Heart left ventricle (tissue), 16 donors: ENCODE measurements at regions of chr3 and their contacts with region 1.

Region 1: DNA sequence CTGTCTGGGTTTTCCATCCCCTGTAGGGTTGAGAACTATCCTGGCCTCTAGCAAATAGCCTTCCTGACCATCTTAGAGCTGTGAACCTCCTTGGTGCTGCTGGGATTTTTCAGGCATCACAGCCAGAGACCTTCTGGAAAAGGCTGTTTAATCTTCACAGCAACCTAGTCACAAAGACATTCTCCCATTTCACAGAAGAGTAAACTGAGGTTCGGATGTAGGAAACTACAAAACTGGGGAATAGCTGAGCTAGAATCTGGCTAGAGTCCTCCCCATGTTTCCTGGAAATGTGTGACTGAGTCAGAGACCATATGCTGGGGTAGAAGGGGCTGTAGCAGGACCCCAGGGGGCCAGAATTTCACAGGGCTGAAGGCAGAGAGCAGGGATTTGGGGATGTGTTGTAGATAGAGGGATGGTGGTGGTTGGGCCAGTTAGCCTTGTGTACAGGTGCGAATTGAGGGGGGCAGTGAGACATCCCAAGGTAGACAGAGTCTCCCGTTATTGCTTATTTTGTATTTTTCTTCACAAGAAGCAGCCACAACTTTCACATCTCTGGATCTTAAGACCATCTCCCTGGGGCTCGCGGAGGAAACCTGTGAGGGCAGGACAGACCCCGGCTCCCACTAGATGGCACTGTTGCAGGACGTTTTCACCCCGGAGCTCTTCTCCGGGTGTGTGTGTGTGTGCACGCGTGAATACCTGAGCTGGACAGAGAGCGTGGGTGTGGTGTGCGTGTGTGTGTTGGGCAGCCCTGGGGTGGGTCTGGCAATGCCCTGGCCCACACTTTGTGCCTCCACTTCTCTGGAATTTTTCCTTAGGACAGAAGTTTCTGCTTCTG is 66.9 kb upstream of the PRR23C start:
- DNase-seq: peak; percentile 37 to 73 (median 59)
- ATAC-seq: peak; percentile 57 to 82 (median 80)
- H3K4me3 ChIP-seq: no peak overlapping the region
- H3K27ac ChIP-seq: no peak overlapping the region
- H3K4me1 ChIP-seq: no peaks in the 10 kb centered on the region
- H3K27me3 ChIP-seq: peaks cover 0 to 8% (median 0%) of the 10 kb centered on the region in 9 donors
- CTCF ChIP-seq: peak; percentile 50 to 76 (median 64)
- POLR2A ChIP-seq: no peak

Region 2: DNA sequence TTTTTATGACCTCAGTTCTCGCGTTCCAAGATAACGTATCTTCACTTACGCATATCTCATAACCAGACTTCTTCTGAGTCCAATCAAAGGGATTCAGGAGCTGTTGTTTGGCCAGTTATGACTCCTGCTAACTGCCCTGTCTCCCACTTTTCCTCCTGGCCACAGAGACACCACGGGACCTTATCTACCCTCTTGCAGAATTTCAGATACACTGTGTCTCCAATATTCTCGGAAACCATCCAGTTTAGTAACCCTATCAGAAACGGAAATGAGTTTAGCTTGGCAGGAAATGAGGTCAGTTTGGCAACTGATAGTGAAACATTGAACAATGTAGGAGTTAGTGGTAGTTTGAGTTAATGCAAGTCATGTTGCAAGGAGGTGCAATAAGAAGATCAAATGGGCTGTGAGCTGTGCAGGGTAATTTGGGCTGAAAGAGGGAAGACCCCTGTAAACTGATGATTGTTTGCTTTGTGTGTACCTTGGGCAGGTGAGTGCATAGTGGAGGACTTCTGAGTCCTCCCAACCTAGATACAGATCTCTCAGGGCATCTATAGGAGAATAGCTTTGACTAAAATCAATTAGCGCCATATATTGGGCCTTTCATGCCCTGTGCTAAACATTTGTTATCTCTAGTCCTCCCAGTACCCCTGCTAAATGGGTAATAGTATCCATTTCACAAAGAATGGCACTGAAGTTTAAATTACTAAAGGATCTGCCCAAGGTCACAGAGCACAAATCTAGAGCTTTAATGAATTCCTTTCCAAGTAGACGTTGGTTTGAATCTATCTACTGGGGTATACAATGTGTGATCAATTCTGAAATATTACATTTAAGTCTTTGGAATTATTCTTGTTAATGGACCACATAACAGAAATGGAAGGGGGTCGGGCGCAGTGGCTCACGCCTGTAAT is 235.6 kb before region 1 on chr3:
- intact Hi-C with region 1: no loop called
- DNase-seq: no peak
- ATAC-seq: peak; percentile 55 to 95 (median 76)
- H3K4me3 ChIP-seq: peak overlapping the region in 3 of 12 donors; percentile 5 to 19 (median 18)
- H3K27ac ChIP-seq: peak overlapping the region in 9 of 12 donors; percentile 17 to 78 (median 47)
- H3K4me1 ChIP-seq: peaks cover 0 to 12% (median 0%) of the 10 kb centered on the region in 12 donors
- H3K27me3 ChIP-seq: no peaks in the 10 kb centered on the region
- CTCF ChIP-seq: no peak
- POLR2A ChIP-seq: no peak

Region 3: GRCh38 chr3:138915503-138916498 is 195.8 kb before region 1 on chr3:
- intact Hi-C with region 1: no loop called
- DNase-seq: peak; percentile 91 to 97 (median 94)
- ATAC-seq: peak; percentile 97 to 98 (median 98)
- H3K4me3 ChIP-seq: peak overlapping the region; percentile 57 to 90 (median 84)
- H3K27ac ChIP-seq: peak overlapping the region; percentile 82 to 98 (median 96)
- H3K4me1 ChIP-seq: peaks cover 0 to 16% (median 6%) of the 10 kb centered on the region in 12 donors
- H3K27me3 ChIP-seq: no peaks in the 10 kb centered on the region
- CTCF ChIP-seq: peak; percentile 78 to 97 (median 87)
- POLR2A ChIP-seq: peak in 1 of 2 donors; percentile 29

Region 4: DNA sequence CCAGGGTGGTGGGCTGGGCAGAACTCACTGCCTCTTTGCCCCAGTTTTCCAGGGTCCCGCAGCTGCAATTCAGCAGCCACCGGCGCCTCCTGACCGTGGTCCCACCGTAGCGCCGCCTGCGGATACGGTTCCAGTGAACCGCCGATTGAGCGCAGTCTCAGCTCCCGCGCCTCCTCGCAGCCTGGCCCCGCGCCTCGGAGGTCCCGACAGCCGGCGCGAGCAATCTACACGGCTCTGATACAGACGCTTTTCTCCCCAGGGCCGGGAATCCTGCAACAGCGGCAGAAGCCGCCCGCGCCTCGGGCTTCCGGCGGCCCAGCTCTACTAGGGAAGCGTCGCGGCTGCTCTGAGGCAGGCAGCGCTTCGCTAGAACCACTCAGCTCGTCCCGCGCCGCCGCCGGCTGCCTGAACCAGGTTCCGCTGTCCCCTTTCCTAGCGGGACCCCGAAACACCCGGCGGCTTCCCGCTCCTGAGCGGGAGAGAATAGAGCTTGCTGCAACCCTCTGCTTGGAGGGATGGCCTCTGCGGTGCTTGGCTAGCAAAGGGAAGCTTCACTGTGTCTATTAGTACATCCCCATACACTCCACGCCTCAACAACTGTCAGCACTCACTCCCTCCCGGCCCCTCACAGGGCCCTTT is 161.5 kb before region 1 on chr3:
- intact Hi-C with region 1: loop called in 1 of 10 experiments (anchors 5 kb)
- DNase-seq: no peak
- ATAC-seq: peak in 3 of 4 donors; percentile 47 to 64 (median 62)
- H3K4me3 ChIP-seq: peak overlapping the region; percentile 14 to 50 (median 39)
- H3K27ac ChIP-seq: no peak overlapping the region
- H3K4me1 ChIP-seq: peaks cover 7 to 39% (median 26%) of the 10 kb centered on the region in 12 donors
- H3K27me3 ChIP-seq: peaks cover 38 to 96% (median 82%) of the 10 kb centered on the region in 9 donors
- CTCF ChIP-seq: no peak
- POLR2A ChIP-seq: no peak

Region 5: DNA sequence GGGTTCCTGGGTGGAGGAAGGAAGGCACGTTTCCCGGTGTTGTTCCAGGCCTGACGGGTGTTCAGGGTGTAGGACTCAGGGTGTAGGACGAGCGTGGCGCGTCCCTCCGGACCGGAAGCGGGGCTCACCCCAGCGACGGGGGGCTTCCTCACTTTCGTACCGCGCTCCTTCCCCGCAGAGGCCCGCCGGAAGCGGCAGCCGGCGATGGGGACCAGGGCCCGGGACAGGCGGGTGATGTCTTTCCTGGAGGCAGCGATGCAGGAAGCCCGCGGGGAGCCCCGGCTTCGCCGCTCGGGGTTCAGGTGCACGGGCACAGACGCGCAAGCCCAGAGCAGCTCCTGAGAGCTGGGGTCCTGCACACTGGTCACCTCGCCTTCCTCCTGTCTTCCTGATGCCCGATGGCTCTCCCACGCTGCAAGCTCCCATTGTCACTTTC is 151.2 kb before region 1 on chr3:
- intact Hi-C with region 1: no loop called
- DNase-seq: no peak
- ATAC-seq: no peak
- H3K4me3 ChIP-seq: no peak overlapping the region
- H3K27ac ChIP-seq: no peak overlapping the region
- H3K4me1 ChIP-seq: peaks cover 0 to 5% (median 0%) of the 10 kb centered on the region in 12 donors
- H3K27me3 ChIP-seq: peaks cover 23 to 84% (median 53%) of the 10 kb centered on the region in 9 donors
- CTCF ChIP-seq: no peak
- POLR2A ChIP-seq: no peak

Region 6: GRCh38 chr3:139095803-139096466 is 15.7 kb before region 1 on chr3:
- intact Hi-C with region 1: no loop called
- DNase-seq: no peak
- ATAC-seq: no peak
- H3K4me3 ChIP-seq: no peak overlapping the region
- H3K27ac ChIP-seq: no peak overlapping the region
- H3K4me1 ChIP-seq: no peaks in the 10 kb centered on the region
- H3K27me3 ChIP-seq: peaks cover 0 to 5% (median 0%) of the 10 kb centered on the region in 9 donors
- CTCF ChIP-seq: no peak
- POLR2A ChIP-seq: no peak

Region 7: DNA sequence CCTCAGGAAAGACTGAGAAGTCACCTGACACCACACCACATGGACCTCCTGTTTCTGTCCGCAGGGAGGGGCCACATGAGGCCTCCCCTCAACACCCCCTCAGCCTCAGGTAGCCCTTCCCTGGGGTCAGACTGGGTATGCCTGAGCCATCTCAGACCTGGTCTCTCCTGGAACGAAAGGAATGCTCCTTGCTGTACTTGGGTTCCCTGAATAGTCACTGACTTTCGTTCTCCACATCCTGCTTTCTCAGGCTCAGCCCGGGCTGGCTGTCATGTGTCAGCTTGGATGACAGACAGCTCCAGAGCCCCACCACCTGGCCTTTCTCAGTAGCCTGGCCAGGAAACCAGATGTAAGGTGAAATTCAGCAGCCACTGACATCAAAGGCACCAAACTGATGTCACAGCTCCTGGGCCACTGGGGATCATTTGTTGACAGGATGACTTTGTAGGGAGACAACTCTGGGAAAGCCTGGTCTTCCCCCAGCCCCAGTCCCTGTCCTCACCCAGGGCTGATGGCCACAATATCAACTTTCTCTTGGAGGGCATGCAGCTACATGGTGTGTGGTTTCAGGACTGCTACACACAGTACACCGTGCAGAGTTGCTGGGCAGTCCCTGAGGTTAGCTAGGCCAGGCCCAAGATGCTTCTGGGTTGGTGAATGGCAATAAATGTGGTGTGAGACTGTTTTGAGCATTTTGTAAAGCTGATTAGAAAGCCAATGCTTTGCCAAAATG is 90.8 kb after region 1 on chr3:
- intact Hi-C with region 1: loop called in 1 of 10 experiments (anchors 10 kb)
- DNase-seq: peak in 2 of 5 donors; percentile 20 to 41
- ATAC-seq: peak in 3 of 4 donors; percentile 41 to 72 (median 49)
- H3K4me3 ChIP-seq: no peak overlapping the region
- H3K27ac ChIP-seq: no peak overlapping the region
- H3K4me1 ChIP-seq: peaks cover 0 to 4% (median 0%) of the 10 kb centered on the region in 12 donors
- H3K27me3 ChIP-seq: no peaks in the 10 kb centered on the region
- CTCF ChIP-seq: peak in 4 of 12 donors; percentile 15 to 37 (median 22)
- POLR2A ChIP-seq: no peak

Region 8: GRCh38 chr3:139319428-139320402 is 208.1 kb after region 1 on chr3:
- intact Hi-C with region 1: loop called in 1 of 10 experiments (anchors 5 kb)
- DNase-seq: no peak
- ATAC-seq: no peak
- H3K4me3 ChIP-seq: no peak overlapping the region
- H3K27ac ChIP-seq: no peak overlapping the region
- H3K4me1 ChIP-seq: peaks cover 0 to 6% (median 0%) of the 10 kb centered on the region in 12 donors
- H3K27me3 ChIP-seq: peaks cover 0 to 22% (median 0%) of the 10 kb centered on the region in 9 donors
- CTCF ChIP-seq: peak in 7 of 12 donors; percentile 10 to 31 (median 22)
- POLR2A ChIP-seq: no peak

Region 9: DNA sequence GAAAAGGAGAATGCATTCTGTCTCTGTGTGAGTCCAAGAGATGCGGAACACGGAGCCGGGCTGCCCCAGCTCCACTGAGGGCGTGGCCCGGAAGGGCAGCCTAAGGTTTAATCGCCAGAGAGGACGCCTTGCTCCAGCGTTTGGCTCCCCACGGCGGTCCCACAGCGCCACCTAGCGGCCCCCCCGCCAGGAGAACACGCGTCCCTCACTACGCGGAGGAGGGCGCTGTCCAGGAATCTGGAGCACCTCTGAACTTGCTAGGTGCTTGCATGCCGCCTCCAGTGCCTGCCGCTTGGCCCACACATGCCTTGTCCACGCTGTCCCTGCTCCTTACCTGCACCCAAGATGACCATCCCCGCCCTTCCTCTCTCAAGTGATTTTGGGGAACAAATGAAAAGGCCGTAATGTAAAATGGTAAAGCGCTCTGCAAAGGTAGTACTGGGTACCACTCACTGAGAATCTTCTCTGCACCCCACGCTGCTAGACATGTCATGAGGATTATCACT is 217.8 kb after region 1 on chr3:
- intact Hi-C with region 1: loop called (anchors 2 to 5 kb)
- DNase-seq: peak; percentile 78 to 93 (median 84)
- ATAC-seq: peak; percentile 86 to 97 (median 96)
- H3K4me3 ChIP-seq: peak overlapping the region in 4 of 12 donors; percentile 18 to 32 (median 29)
- H3K27ac ChIP-seq: no peak overlapping the region
- H3K4me1 ChIP-seq: peaks cover 0 to 8% (median 2%) of the 10 kb centered on the region in 12 donors
- H3K27me3 ChIP-seq: peaks cover 0 to 31% (median 9%) of the 10 kb centered on the region in 9 donors
- CTCF ChIP-seq: peak; percentile 97 to 100 (median 98)
- POLR2A ChIP-seq: no peak